B cell (primary cell): ENCODE measurements at regions of chr4 and their contacts with region 1.

Region 1: DNA sequence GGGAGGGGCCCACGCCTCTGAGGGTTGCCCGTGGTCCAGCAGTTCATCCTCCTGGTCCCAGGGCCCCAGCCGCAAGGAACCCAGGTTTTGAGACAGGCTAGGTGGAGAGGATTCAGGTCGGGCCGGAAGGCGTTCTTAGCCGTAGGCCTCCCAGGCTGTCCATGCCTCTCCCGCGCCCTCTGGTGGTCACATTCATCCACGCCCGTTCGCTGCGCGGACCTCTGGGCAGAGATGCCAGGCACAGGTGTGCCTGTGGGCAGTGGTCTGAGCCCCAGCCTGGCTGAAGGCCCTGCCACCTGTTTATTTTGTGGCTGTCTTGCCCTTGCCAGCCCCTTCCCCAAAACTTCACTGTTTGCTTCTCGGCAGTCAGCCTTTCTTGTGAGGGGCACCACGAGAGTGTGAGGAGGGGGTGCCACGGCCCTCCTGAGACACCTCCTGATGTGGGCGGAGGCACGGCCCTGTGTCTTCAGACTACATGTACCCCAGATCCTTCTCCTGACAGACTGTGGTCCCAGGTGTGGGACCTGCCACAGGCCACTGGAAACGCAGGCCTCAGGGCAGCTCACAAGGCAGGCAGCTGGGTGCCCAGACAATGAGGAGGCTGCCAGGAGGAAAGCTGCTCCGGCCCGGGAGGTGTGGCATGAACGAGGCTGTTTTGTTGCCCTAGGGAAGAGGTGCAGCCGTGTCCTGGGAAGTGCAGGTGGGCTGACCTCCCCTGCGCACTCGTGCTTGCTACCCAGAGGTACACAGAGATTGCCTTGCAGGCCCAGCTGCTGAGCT is 5.0 kb downstream of the UVSSA start:
- DNase-seq: peak; percentile 90
- ATAC-seq: peak; percentile 26
- H3K4me3 ChIP-seq: no peak overlapping the region
- H3K4me3 Mint-ChIP-seq: no peak overlapping the region
- H3K27ac ChIP-seq: no peak overlapping the region
- H3K27ac Mint-ChIP-seq: peak overlapping the region; percentile 67
- H3K4me1 ChIP-seq: peaks cover 10 to 20% of the 10 kb centered on the region in 2 donors
- H3K4me1 Mint-ChIP-seq: peaks cover 25% of the 10 kb centered on the region
- H3K27me3 ChIP-seq: no peaks in the 10 kb centered on the region
- H3K27me3 Mint-ChIP-seq: no peaks in the 10 kb centered on the region
- CTCF ChIP-seq: peak; percentile 90

Region 2: GRCh38 chr4:242121-242848 is 1109.8 kb before region 1 on chr4:
- CTCF ChIA-PET with region 1: no interaction called
- POLR2A ChIA-PET with region 1: no interaction called
- intact Hi-C with region 1: loop called (anchors 5 kb)
- DNase-seq: peak; percentile 87
- ATAC-seq: peak; percentile 95
- H3K4me3 ChIP-seq: peak overlapping the region in 4 of 5 experiments; percentile 40 to 72 (median 50)
- H3K4me3 Mint-ChIP-seq: peak overlapping the region; percentile 92
- H3K27ac ChIP-seq: peak overlapping the region; percentile 57 to 70
- H3K27ac Mint-ChIP-seq: peak overlapping the region; percentile 92
- H3K4me1 ChIP-seq: peaks cover 5 to 13% of the 10 kb centered on the region in 2 donors
- H3K4me1 Mint-ChIP-seq: peaks cover 13% of the 10 kb centered on the region
- H3K27me3 ChIP-seq: no peaks in the 10 kb centered on the region
- H3K27me3 Mint-ChIP-seq: no peaks in the 10 kb centered on the region
- CTCF ChIP-seq: peak; percentile 88

Region 3: GRCh38 chr4:742742-743311 is 609.2 kb before region 1 on chr4:
- CTCF ChIA-PET with region 1: interaction called, 7 read pairs
- POLR2A ChIA-PET with region 1: no interaction called
- intact Hi-C with region 1: loop called (anchors 2 kb)
- DNase-seq: peak; percentile 80
- ATAC-seq: peak; percentile 91
- H3K4me3 ChIP-seq: no peak overlapping the region
- H3K4me3 Mint-ChIP-seq: no peak overlapping the region
- H3K27ac ChIP-seq: no peak overlapping the region
- H3K27ac Mint-ChIP-seq: no peak overlapping the region
- H3K4me1 ChIP-seq: peaks cover 0 to 8% of the 10 kb centered on the region in 2 donors
- H3K4me1 Mint-ChIP-seq: peaks cover 2% of the 10 kb centered on the region
- H3K27me3 ChIP-seq: no peaks in the 10 kb centered on the region
- H3K27me3 Mint-ChIP-seq: no peaks in the 10 kb centered on the region
- CTCF ChIP-seq: peak; percentile 95

Region 4: GRCh38 chr4:924107-925096 is 427.6 kb before region 1 on chr4:
- CTCF ChIA-PET with region 1: no interaction called
- POLR2A ChIA-PET with region 1: no interaction called
- intact Hi-C with region 1: loop called (anchors 5 kb)
- DNase-seq: peak; percentile 60
- ATAC-seq: peak; percentile 22
- H3K4me3 ChIP-seq: no peak overlapping the region
- H3K4me3 Mint-ChIP-seq: peak overlapping the region; percentile 51
- H3K27ac ChIP-seq: peak overlapping the region; percentile 89 to 93
- H3K27ac Mint-ChIP-seq: peak overlapping the region; percentile 77
- H3K4me1 ChIP-seq: peaks cover 62 to 77% of the 10 kb centered on the region in 2 donors
- H3K4me1 Mint-ChIP-seq: peaks cover 71% of the 10 kb centered on the region
- H3K27me3 ChIP-seq: no peaks in the 10 kb centered on the region
- H3K27me3 Mint-ChIP-seq: no peaks in the 10 kb centered on the region
- CTCF ChIP-seq: no peak

Region 5: DNA sequence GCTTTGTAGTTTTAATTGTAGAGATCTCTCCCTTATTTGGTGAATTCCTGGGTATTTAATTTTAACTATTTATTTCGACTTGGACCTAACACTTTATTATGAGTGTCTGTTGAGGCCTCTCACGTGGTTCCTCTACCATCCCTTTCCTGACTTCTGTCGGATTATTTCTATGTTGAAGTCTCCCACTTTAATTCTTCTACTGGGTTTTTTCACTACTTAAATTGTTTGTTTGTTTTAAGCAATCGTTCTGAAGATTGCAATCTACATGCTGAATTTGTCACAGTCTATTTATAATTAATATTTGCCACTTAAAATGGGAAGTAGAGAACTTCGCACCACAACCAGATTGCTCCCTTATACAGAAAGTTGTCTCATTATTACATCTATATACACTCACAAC is 75.0 kb after region 1 on chr4:
- CTCF ChIA-PET with region 1: no interaction called
- POLR2A ChIA-PET with region 1: no interaction called
- intact Hi-C with region 1: no loop called
- DNase-seq: no peak
- ATAC-seq: no peak
- H3K4me3 ChIP-seq: no peak overlapping the region
- H3K4me3 Mint-ChIP-seq: no peak overlapping the region
- H3K27ac ChIP-seq: no peak overlapping the region
- H3K27ac Mint-ChIP-seq: no peak overlapping the region
- H3K4me1 ChIP-seq: no peaks in the 10 kb centered on the region
- H3K4me1 Mint-ChIP-seq: no peaks in the 10 kb centered on the region
- H3K27me3 ChIP-seq: peaks cover 0 to 4% (median 0%) of the 10 kb centered on the region in 4 experiments
- H3K27me3 Mint-ChIP-seq: peaks cover 22% of the 10 kb centered on the region
- CTCF ChIP-seq: no peak

Region 6: GRCh38 chr4:1628892-1629698 is 277.1 kb after region 1 on chr4:
- CTCF ChIA-PET with region 1: interaction called, 22 read pairs
- POLR2A ChIA-PET with region 1: no interaction called
- intact Hi-C with region 1: no loop called
- DNase-seq: peak; percentile 72
- ATAC-seq: peak; percentile 70
- H3K4me3 ChIP-seq: no peak overlapping the region
- H3K4me3 Mint-ChIP-seq: no peak overlapping the region
- H3K27ac ChIP-seq: no peak overlapping the region
- H3K27ac Mint-ChIP-seq: no peak overlapping the region
- H3K4me1 ChIP-seq: peaks cover 0 to 4% of the 10 kb centered on the region in 2 donors
- H3K4me1 Mint-ChIP-seq: no peaks in the 10 kb centered on the region
- H3K27me3 ChIP-seq: peaks cover 0 to 4% (median 0%) of the 10 kb centered on the region in 4 experiments
- H3K27me3 Mint-ChIP-seq: no peaks in the 10 kb centered on the region
- CTCF ChIP-seq: peak; percentile 96